ENCODE measurements at regions of chr14 and their contacts with region 1.

Region 1: GRCh38 chr14:66495218-66496098 is 9.3 kb downstream of the CCDC196 start:
- DNase-seq: peak in 7 of 9 donors; percentile 11 to 44 (median 27)
- ATAC-seq: peak; percentile 83
- H3K4me3 ChIP-seq: no peak overlapping the region
- H3K4me3 Mint-ChIP-seq: peak overlapping the region in 7 of 10 donors; percentile 6 to 67 (median 14)
- H3K27ac ChIP-seq: no peak overlapping the region
- H3K27ac Mint-ChIP-seq: peak overlapping the region in 2 of 9 donors; percentile 11 to 53
- H3K4me1 ChIP-seq: peaks cover 0 to 10% of the 10 kb centered on the region in 2 donors
- H3K4me1 Mint-ChIP-seq: peaks cover 8 to 29% (median 24%) of the 10 kb centered on the region in 7 donors
- H3K27me3 ChIP-seq: no peaks in the 10 kb centered on the region
- H3K27me3 Mint-ChIP-seq: no peaks in the 10 kb centered on the region

Region 2: GRCh38 chr14:66543996-66544395 is 48.5 kb after region 1 on chr14:
- CTCF ChIA-PET with region 1: interaction called, 10 read pairs
- POLR2A ChIA-PET with region 1: no interaction called
- intact Hi-C with region 1: loop called in 1 of 2 experiments (anchors 1 kb)
- DNase-seq: no peak
- ATAC-seq: no peak
- H3K4me3 ChIP-seq: no peak overlapping the region
- H3K4me3 Mint-ChIP-seq: no peak overlapping the region
- H3K27ac ChIP-seq: no peak overlapping the region
- H3K27ac Mint-ChIP-seq: no peak overlapping the region
- H3K4me1 ChIP-seq: no peaks in the 10 kb centered on the region
- H3K4me1 Mint-ChIP-seq: peaks cover 0 to 13% (median 8%) of the 10 kb centered on the region in 7 donors
- H3K27me3 ChIP-seq: no peaks in the 10 kb centered on the region
- H3K27me3 Mint-ChIP-seq: no peaks in the 10 kb centered on the region

Region 3: DNA sequence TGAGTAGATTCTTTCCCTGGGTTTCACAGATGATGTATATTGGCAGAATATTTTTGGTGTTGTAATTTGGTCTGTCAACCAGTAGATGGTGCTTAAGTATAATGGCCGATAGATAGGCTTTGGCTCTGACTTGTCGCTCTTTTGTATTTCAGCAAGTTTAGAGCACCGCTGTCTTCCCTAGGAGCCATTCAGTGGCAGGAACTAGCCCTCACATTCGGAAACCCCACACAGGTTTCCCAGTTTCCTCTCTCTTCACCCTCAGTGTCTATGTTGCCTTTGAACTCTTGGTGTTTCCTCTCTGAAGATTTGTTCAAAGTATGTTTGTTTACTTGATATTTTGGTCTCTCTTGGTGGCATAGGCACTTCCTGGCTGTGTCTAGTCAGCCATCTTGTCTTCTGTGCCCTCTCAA is 114.7 kb after region 1 on chr14:
- CTCF ChIA-PET with region 1: no interaction called
- POLR2A ChIA-PET with region 1: no interaction called
- intact Hi-C with region 1: loop called in 1 of 2 experiments (anchors 1 kb)
- DNase-seq: peak in 5 of 9 donors; percentile 1 to 46 (median 5)
- ATAC-seq: peak; percentile 24
- H3K4me3 ChIP-seq: no peak overlapping the region
- H3K4me3 Mint-ChIP-seq: peak overlapping the region in 2 of 10 donors; percentile 41 to 53
- H3K27ac ChIP-seq: no peak overlapping the region
- H3K27ac Mint-ChIP-seq: peak overlapping the region in 7 of 9 donors; percentile 9 to 85 (median 31)
- H3K4me1 ChIP-seq: no peaks in the 10 kb centered on the region
- H3K4me1 Mint-ChIP-seq: peaks cover 0 to 16% (median 14%) of the 10 kb centered on the region in 7 donors
- H3K27me3 ChIP-seq: no peaks in the 10 kb centered on the region
- H3K27me3 Mint-ChIP-seq: peaks cover 0 to 5% (median 0%) of the 10 kb centered on the region in 5 donors

Region 4: GRCh38 chr14:66624299-66624937 is 129.0 kb after region 1 on chr14:
- CTCF ChIA-PET with region 1: no interaction called
- POLR2A ChIA-PET with region 1: no interaction called
- intact Hi-C with region 1: no loop called
- DNase-seq: peak in 6 of 9 donors; percentile 0 to 24 (median 6)
- ATAC-seq: no peak
- H3K4me3 ChIP-seq: no peak overlapping the region
- H3K4me3 Mint-ChIP-seq: no peak overlapping the region
- H3K27ac ChIP-seq: no peak overlapping the region
- H3K27ac Mint-ChIP-seq: no peak overlapping the region
- H3K4me1 ChIP-seq: no peaks in the 10 kb centered on the region
- H3K4me1 Mint-ChIP-seq: peaks cover 0 to 18% (median 9%) of the 10 kb centered on the region in 7 donors
- H3K27me3 ChIP-seq: no peaks in the 10 kb centered on the region
- H3K27me3 Mint-ChIP-seq: peaks cover 0 to 4% (median 0%) of the 10 kb centered on the region in 5 donors

Region 5: DNA sequence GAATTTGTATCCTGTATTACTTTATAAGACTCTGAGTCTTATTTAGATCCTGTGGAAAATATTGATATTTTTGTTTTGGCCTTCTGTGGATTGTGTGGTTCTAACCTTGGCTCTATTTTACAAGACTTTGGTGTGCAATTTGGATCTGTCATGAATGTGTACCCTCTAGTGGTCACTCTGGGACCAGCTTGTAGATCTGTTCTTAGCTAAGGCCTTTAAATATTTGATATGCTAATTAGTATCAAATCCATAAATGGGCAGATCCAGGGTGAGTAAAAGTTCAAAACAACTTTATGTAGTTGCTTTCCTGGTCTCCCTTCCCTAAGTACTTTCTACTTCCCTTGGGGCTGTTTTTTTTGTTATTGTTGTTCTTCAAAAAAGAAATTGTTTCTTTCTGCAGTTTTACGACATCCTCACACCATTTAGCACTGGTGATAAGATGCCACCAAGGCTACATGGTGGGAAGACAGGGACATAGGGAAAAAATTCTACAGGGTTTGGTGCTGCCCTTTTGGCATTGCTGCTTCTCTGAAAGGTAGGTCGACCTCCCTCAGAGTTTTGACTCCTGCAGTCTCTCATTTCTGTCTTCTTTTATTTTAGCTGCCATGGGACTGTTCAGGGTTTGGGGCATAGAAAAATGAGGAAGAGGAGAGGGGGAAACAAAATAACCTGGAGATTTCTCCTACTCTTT is 251.0 kb after region 1 on chr14:
- CTCF ChIA-PET with region 1: interaction called, 3 read pairs
- POLR2A ChIA-PET with region 1: no interaction called
- intact Hi-C with region 1: loop called (anchors 1 to 2 kb)
- DNase-seq: peak in 3 of 9 donors; percentile 2 to 5 (median 2)
- ATAC-seq: no peak
- H3K4me3 ChIP-seq: no peak overlapping the region
- H3K4me3 Mint-ChIP-seq: no peak overlapping the region
- H3K27ac ChIP-seq: no peak overlapping the region
- H3K27ac Mint-ChIP-seq: no peak overlapping the region
- H3K4me1 ChIP-seq: no peaks in the 10 kb centered on the region
- H3K4me1 Mint-ChIP-seq: peaks cover 0 to 1% (median 0%) of the 10 kb centered on the region in 7 donors
- H3K27me3 ChIP-seq: no peaks in the 10 kb centered on the region
- H3K27me3 Mint-ChIP-seq: no peaks in the 10 kb centered on the region

Region 6: DNA sequence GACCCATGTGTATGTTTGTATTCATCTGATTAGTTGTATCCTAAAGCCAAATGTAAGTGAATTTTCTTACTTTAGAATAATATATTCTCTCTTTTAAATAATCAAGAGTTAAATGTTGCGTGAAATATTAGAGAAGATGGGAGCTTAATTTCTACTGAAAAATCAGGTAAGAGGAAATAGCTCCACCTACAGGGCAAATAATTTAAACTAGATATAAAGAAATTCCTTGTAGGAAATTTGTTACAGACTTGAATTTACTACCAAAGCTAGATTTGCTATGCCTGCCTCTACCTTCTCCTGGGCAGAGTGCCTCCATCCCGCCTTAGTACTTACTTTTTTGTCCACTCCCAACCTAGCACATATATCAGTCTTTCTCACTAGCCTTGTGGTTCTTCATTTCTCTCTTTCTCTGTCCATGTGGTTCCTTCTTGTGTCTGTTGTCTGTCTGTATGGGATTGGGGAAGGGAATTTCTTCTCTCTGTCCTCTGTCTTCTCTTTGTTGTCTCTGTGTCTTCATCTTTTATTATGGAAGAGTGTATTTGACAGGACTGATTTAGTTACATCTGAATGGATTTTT is 790.5 kb after region 1 on chr14:
- CTCF ChIA-PET with region 1: no interaction called
- POLR2A ChIA-PET with region 1: no interaction called
- intact Hi-C with region 1: loop called in 1 of 2 experiments (anchors 1 kb)
- DNase-seq: peak in 6 of 9 donors; percentile 3 to 37 (median 30)
- ATAC-seq: no peak
- H3K4me3 ChIP-seq: no peak overlapping the region
- H3K4me3 Mint-ChIP-seq: no peak overlapping the region
- H3K27ac ChIP-seq: no peak overlapping the region
- H3K27ac Mint-ChIP-seq: peak overlapping the region in 1 of 9 donors; percentile 83
- H3K4me1 ChIP-seq: no peaks in the 10 kb centered on the region
- H3K4me1 Mint-ChIP-seq: peaks cover 0 to 5% (median 0%) of the 10 kb centered on the region in 7 donors
- H3K27me3 ChIP-seq: no peaks in the 10 kb centered on the region
- H3K27me3 Mint-ChIP-seq: no peaks in the 10 kb centered on the region

Measured in naive thymus-derived CD4-positive, alpha-beta T cell (primary cell).